Activated T-helper 1 cell treated with anti-CD3 and anti-CD28 coated beads, Interleukin-12 subunit alpha, Interleukin-12 subunit beta, Interleukin-2, Interleukin-4 antibody, amounts not matched to agents 30 ng/mL and 10 ng/mL and 1 ng/mL, durations not matched to agents 14 hours and 24 hours and 36 hours (primary cell): ENCODE measurements at regions of chr7 and their contacts with region 1.

Region 1: DNA sequence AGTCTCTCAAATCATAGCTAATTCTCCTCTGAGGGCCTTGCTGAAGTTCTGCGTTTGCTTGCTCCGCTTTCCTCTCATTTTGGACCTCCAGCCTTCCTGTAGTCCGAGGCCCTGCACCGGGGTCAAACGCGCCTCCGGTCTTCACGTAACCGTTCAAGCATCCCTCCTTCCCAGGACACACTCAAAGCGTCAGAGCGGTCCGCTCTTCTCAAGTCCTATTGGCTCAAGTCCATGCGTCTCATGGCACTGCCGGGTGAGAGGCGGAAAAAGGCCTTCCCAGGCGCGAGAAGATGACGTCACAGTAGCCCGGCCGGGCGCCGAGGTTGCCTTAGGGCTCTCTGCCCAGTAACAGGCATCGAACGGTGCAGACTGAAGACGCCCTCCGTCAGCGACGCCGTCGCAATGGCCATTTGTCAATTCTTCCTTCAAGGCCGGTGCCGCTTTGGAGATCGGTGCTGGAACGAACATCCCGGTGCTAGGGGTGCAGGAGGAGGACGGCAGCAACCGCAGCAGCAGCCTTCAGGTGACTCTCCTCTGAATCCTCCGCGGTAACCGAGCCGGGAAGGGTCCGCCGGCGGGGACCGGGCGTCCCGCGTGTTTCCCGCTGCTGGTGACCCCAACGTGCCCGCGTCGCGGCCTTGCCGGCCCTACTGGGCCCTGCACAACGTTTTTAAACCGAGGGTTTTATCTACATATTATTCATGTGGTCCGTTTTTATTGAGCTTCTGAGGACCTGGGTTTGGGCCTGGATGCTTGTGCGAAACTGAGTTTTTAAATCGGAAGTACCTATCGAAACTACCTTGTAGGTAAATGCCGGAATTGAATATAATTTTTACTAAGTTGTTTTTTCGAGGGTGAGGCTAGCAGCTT is at the start of gene NUP42:
- DNase-seq: peak; percentile 96
- H3K4me3 Mint-ChIP-seq: peak within 1 kb of the TSS; percentile 90
- H3K27ac Mint-ChIP-seq: peak within 1 kb of the TSS; percentile 99
- H3K4me1 Mint-ChIP-seq: peaks cover 35% of the 10 kb centered on the region
- H3K27me3 Mint-ChIP-seq: peaks cover 8% of the 10 kb centered on the region
- total RNA-seq, gene NUP42: 52.7 and 55.2 TPM in 2 replicates

Region 2: GRCh38 chr7:22822486-22823141 is 359.3 kb before region 1 on chr7 and contains the start of gene TOMM7:
- intact Hi-C with region 1: loop called (anchors 1 kb)
- DNase-seq: peak; percentile 81
- H3K4me3 Mint-ChIP-seq: peak within 1 kb of the TSS; percentile 98
- H3K27ac Mint-ChIP-seq: peak within 1 kb of the TSS; percentile 93
- H3K4me1 Mint-ChIP-seq: peaks cover 41% of the 10 kb centered on the region
- H3K27me3 Mint-ChIP-seq: peaks cover 17% of the 10 kb centered on the region
- total RNA-seq, gene TOMM7: 187 and 225 TPM in 2 replicates

Region 3: DNA sequence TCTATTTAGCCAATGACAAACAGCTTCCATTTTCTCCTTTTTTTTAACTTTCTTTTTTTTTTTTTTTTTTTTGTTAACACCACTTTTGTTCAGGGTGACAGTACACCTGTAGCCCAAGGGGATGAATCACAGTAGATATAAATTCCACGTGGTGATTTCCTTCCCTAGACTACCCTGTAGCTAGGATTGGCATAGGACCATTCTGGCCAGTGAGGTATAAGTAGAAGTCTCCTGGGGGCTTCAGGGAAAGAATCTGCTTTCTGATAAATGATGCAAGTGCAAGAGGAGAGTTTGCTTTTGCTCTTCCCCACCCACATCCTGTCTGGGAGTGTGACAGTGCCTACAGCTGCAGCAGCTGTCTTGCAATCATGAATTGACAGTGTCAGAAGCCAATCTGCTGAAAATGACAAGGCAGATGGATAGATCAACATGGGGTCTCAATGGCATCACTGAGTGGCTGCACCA is 296.1 kb before region 1 on chr7:
- intact Hi-C with region 1: loop called (anchors 5 kb)
- DNase-seq: peak; percentile 60
- H3K4me3 Mint-ChIP-seq: peak overlapping the region; percentile 59
- H3K27ac Mint-ChIP-seq: peak overlapping the region; percentile 93
- H3K4me1 Mint-ChIP-seq: peaks cover 41% of the 10 kb centered on the region
- H3K27me3 Mint-ChIP-seq: no peaks in the 10 kb centered on the region

Region 4: DNA sequence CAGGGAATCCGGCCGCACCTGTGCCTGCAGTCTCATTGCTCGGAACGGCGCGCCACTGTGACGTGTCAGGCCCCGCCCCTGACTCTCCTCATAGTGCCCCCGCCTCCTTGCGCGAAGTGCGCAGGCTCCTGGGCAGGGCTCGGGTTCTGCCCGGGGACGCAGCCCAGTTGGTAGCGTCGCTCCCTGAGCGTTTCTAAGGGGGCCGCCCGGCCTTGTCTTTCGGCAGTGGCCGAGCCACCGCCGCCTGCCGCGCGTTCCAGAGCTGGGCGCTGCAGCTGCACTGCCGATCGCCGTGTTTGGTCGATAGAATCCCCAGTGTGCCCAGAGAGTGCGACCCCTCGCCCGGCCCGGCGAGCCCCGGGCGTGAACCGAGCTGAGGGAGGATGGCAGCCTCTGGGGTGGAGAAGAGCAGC is 76.3 kb before region 1 on chr7 and contains the start of gene KLHL7:
- intact Hi-C with region 1: loop called (anchors 1 kb)
- DNase-seq: peak; percentile 95
- H3K4me3 Mint-ChIP-seq: peak within 1 kb of the TSS; percentile 94
- H3K27ac Mint-ChIP-seq: peak within 1 kb of the TSS; percentile 96
- H3K4me1 Mint-ChIP-seq: peaks cover 30% of the 10 kb centered on the region
- H3K27me3 Mint-ChIP-seq: no peaks in the 10 kb centered on the region
- total RNA-seq, gene KLHL7: 18.2 and 19.7 TPM in 2 replicates

Region 5: GRCh38 chr7:23298885-23299769 is 117.2 kb after region 1 on chr7 and contains the start of gene MALSU1:
- intact Hi-C with region 1: loop called (anchors 1 kb)
- DNase-seq: peak; percentile 93
- H3K4me3 Mint-ChIP-seq: peak within 1 kb of the TSS; percentile 88
- H3K27ac Mint-ChIP-seq: peak within 1 kb of the TSS; percentile 88
- H3K4me1 Mint-ChIP-seq: peaks cover 38% of the 10 kb centered on the region
- H3K27me3 Mint-ChIP-seq: peaks cover 4% of the 10 kb centered on the region
- total RNA-seq, gene MALSU1: 92.3 and 92.8 TPM in 2 replicates

Region 6: DNA sequence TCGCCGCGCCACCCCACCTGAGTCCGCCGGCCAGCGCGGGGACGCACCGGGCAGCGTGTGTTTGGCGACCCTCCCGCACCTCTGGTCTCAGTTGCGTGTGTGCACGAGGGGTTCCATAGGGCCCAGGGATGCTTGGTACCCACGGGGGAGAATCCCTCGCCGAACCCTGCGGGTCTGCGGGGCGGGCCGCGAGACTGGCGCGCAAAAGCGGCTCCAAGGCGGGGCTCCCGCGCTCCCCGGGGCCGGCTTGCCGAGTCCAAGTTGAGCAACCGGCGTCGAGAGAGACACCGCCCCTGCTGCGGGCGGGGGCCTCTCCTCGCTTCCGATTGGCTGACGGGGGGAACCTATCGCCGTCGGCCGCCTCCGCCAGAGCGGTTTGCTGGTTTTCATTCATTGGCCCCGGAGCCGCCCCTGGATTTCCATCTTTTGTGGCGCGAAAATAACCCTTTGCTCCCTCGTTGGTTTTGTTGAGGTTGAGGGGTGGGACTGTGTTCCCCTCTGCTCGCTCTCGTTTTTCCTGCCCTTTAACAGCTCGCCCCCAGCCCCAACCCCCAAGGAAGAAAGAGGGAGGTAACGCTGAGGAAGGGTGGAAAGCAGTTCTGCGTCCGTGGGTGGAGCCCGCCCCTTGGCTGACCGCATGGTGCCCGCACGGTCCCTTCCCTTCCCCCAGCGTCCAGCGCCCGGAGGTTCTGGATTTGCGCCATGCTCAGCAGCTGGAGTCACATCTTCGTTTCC is 292.3 kb after region 1 on chr7:
- intact Hi-C with region 1: loop called (anchors 2 kb)
- DNase-seq: peak; percentile 89
- H3K4me3 Mint-ChIP-seq: peak overlapping the region; percentile 83
- H3K27ac Mint-ChIP-seq: peak overlapping the region; percentile 57
- H3K4me1 Mint-ChIP-seq: peaks cover 39% of the 10 kb centered on the region
- H3K27me3 Mint-ChIP-seq: peaks cover 63% of the 10 kb centered on the region

Region 7: DNA sequence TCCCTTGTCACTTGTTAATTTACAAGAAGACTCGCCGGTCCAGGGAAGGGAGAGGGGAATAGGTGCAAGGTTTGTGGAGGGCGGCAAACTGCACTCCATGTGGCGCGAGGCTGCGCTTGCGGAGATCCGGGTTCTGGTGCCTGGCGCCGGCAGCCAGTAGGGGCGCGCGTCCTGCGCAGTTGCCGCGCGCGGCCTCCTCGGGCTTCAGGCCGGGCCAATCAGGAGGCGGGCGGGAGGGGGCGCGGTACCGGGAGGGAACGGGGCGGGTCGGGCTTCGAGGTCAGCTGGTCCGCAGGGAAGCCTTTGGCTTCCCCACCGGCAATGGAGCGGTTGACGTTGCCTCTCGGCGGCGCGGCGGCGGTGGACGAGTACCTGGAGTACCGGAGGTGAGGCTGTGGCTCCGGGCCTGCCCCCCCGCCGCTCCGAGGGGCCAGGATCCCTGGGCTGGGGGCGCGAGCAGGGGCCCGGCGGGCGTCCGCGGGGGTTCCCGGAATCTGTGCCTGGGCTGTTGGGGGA is 498.0 kb after region 1 on chr7 and contains the start of gene FAM221A:
- intact Hi-C with region 1: loop called (anchors 5 kb)
- DNase-seq: peak; percentile 70
- H3K4me3 Mint-ChIP-seq: peak within 1 kb of the TSS; percentile 88
- H3K27ac Mint-ChIP-seq: peak within 1 kb of the TSS; percentile 72
- H3K4me1 Mint-ChIP-seq: peaks cover 12% of the 10 kb centered on the region
- H3K27me3 Mint-ChIP-seq: peaks cover 18% of the 10 kb centered on the region
- total RNA-seq, gene FAM221A: 9.4 and 9.9 TPM in 2 replicates